HepG2 (cell line): ENCODE measurements at regions of chr17 and their contacts with region 1.

Region 1: GRCh38 chr17:44911133-44912001 is 3.9 kb downstream of the GFAP start:
- DNase-seq: peak; percentile 74
- ATAC-seq: peak; percentile 86
- H3K4me3 ChIP-seq: peak overlapping the region; percentile 29 to 63 (median 52); a peak in 4 of 6 replicates
- H3K27ac ChIP-seq: no peak overlapping the region
- H3K4me1 ChIP-seq: peaks cover 69% of the 10 kb centered on the region
- H3K27me3 ChIP-seq: peaks cover 10 to 51% of the 10 kb centered on the region in 2 experiments; a peak in 4 of 5 replicates
- CTCF ChIP-seq: peak; percentile 90
- EP300 ChIP-seq: no peak
- POLR2A ChIP-seq: no peak
- RAD21 ChIP-seq: peak; percentile 67; the same call in 1 of the 2 replicates

Region 2: GRCh38 chr17:44878627-44879221 is 32.6 kb before region 1 on chr17:
- CTCF ChIA-PET with region 1: no interaction called
- POLR2A ChIA-PET with region 1: no interaction called
- in situ Hi-C with region 1: no loop called
- intact Hi-C with region 1: no loop called
- DNase-seq: peak; percentile 37
- ATAC-seq: peak; percentile 45; the same call in 2 of the 3 replicates
- H3K4me3 ChIP-seq: no peak overlapping the region
- H3K27ac ChIP-seq: no peak overlapping the region
- H3K4me1 ChIP-seq: no peaks in the 10 kb centered on the region
- H3K27me3 ChIP-seq: no peaks in the 10 kb centered on the region
- CTCF ChIP-seq: peak; percentile 65
- EP300 ChIP-seq: no peak
- POLR2A ChIP-seq: no peak
- RAD21 ChIP-seq: no peak; the same call in 1 of the 2 replicates

Region 3: GRCh38 chr17:45021607-45022287 is 110.4 kb after region 1 on chr17:
- CTCF ChIA-PET with region 1: interaction called, 10 read pairs
- POLR2A ChIA-PET with region 1: interaction called, 3 read pairs
- in situ Hi-C with region 1: no loop called
- intact Hi-C with region 1: no loop called
- DNase-seq: peak; percentile 53
- ATAC-seq: peak; percentile 81
- H3K4me3 ChIP-seq: peak overlapping the region; percentile 55 to 77 (median 59)
- H3K27ac ChIP-seq: peak overlapping the region; percentile 60
- H3K4me1 ChIP-seq: peaks cover 50% of the 10 kb centered on the region
- H3K27me3 ChIP-seq: peaks cover 0 to 16% of the 10 kb centered on the region in 2 experiments; a peak in 2 of 5 replicates
- CTCF ChIP-seq: peak; percentile 79
- EP300 ChIP-seq: no peak
- POLR2A ChIP-seq: peak; percentile 32 to 65; a peak in 2 of 4 replicates
- RAD21 ChIP-seq: peak; percentile 98